Sciatic nerve (tissue), 2 donors: ENCODE measurements at regions of chr12 and their contacts with region 1.

Region 1: GRCh38 chr12:10771132-10771733 is 31.2 kb downstream of the TAS2R7 start:
- DNase-seq: no peak
- ATAC-seq: no peak

Region 2: DNA sequence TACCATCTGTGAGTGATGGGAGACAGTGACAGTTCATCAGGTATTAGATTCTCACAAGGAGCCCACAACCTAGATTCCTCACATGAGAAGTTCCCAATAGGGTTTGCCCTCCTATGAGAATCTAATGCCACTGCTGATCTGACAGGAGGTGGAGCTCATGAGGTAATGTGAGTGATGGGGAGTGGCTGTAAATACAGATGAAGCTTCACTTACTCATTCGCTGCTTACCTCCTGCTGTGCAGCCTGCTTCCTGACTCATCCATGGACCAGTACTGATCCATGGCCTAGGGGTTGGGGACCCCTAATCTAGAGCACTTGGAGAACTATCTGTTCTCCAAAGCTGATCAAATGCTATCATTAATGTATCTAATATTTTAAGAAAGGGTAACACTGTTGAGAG is 1084.0 kb before region 1 on chr12:
- intact Hi-C with region 1: no loop called
- DNase-seq: no peak
- ATAC-seq: no peak

Region 3: DNA sequence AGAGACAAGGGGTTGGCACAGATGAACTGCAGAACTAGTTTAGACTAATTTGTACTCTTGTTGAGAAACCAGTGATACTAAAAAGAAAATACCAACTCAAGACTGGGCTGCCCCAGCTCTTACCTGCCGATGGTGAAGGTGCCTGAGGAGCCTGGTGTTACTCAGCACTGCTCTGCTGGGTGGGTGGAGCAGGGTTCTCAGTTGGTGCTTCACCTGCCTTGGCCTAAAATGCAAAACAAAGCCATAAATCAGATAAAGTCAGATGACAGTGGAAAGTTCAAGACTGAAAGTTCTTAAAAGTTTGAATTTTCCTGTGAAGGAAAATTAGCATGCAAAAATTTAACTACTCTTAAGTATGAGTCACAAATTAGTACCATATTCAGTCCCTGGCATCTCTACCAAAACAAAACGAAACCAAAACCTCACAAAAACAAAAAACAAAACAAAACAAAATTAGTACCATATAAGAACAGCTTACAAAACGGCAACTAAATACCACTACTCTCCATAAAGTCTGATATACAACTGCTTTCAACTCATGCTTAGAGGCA is 70.0 kb before region 1 on chr12:
- intact Hi-C with region 1: no loop called
- DNase-seq: no peak
- ATAC-seq: no peak

Region 4: GRCh38 chr12:11209108-11209507 is 437.9 kb after region 1 on chr12:
- intact Hi-C with region 1: loop called (anchors 10 kb)
- DNase-seq: no peak
- ATAC-seq: no peak